Heart left ventricle (tissue), 16 donors: ENCODE measurements at regions of chr5 and their contacts with region 1.

Region 1: DNA sequence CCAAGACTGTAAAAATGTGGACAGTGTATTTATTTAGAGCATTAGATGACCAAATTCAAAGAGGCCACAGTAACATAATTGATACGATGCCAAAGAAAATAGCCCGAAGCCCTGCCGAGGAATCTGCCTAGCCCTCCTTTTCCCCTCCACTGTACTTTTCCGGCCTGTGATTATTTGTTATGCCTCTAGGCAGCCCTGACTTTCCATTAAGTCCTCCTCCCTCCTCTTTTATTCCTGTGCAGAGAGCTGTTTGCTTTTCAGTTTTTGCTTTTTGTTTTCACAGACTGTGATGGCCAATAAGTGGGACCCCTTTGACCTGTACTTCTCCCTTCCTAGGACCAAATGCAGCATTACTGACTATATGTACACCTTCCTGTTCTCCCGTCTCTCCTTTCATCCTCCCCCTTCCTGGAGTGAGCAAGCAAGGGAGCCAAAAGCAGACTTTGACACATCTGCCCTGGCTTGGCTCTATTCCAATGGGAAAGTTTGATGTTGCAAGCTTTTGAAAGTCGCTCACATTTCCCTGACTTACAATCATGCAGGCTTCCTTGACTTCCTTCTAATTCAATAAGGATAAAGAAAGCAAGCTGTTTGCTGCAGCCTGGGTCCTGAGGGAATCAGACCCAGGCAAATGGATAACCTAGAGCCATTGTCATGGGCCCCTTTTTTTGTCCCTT is 76.1 kb downstream of the NREP start:
- DNase-seq: peak in 4 of 5 donors; percentile 64 to 85 (median 73)
- ATAC-seq: peak; percentile 74 to 88 (median 88)
- H3K4me3 ChIP-seq: peak overlapping the region in 6 of 12 donors; percentile 10 to 29 (median 17)
- H3K27ac ChIP-seq: peak overlapping the region; percentile 30 to 72 (median 66)
- H3K4me1 ChIP-seq: peaks cover 0 to 37% (median 22%) of the 10 kb centered on the region in 12 donors
- H3K27me3 ChIP-seq: no peaks in the 10 kb centered on the region
- CTCF ChIP-seq: no peak
- POLR2A ChIP-seq: no peak

Region 2: GRCh38 chr5:111478266-111478665 is 202.6 kb before region 1 on chr5:
- intact Hi-C with region 1: no loop called
- DNase-seq: no peak
- ATAC-seq: no peak
- H3K4me3 ChIP-seq: no peak overlapping the region
- H3K27ac ChIP-seq: no peak overlapping the region
- H3K4me1 ChIP-seq: no peaks in the 10 kb centered on the region
- H3K27me3 ChIP-seq: no peaks in the 10 kb centered on the region
- CTCF ChIP-seq: peak in 1 of 12 donors; percentile 17
- POLR2A ChIP-seq: no peak

Region 3: DNA sequence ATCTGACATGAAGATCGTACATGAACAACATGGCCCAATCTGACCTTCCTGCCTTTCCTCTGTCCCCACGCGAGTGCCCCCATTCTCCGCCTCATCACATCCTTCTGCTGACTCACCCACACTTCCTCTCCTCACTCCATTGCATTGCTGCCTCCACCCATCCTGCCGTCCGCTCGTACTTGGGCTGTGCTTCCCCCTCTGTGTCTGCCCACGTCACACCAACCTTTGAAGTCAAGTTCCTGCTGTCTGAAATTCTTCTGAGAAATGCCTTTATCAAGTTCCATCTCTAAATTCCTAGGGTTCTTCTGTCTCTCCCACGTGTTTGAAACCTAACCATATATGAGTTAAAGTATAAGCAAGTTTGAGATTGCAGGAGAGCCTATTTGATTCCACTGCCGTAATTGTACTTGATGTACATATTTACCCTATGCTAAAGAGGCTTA is 150.6 kb before region 1 on chr5:
- intact Hi-C with region 1: loop called in 1 of 10 experiments (anchors 10 kb)
- DNase-seq: peak; percentile 80 to 88 (median 81)
- ATAC-seq: peak; percentile 91 to 100 (median 98)
- H3K4me3 ChIP-seq: no peak overlapping the region
- H3K27ac ChIP-seq: peak overlapping the region in 11 of 12 donors; percentile 22 to 82 (median 57)
- H3K4me1 ChIP-seq: peaks cover 0 to 51% (median 0%) of the 10 kb centered on the region in 12 donors
- H3K27me3 ChIP-seq: no peaks in the 10 kb centered on the region
- CTCF ChIP-seq: no peak
- POLR2A ChIP-seq: no peak

Region 4: DNA sequence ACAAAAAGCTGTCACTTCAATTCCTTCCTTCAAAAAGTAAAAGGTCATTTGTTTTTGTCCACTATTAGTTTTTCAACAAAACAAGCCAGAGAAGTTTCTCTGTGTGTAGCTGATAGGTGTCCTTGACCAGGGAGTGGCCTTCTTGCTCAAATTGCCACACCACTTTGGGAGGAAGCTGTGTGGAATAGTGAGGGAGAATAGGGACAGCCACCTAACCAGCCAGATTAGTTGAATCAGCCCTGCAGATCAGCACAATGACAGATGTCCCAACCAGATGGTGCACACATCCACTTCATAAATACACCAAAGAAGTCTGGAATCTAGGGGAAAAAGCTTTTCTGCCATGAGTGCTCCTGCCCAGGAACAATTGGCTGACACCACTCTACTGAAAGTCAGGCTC is 38.9 kb after region 1 on chr5:
- intact Hi-C with region 1: no loop called
- DNase-seq: no peak
- ATAC-seq: no peak
- H3K4me3 ChIP-seq: no peak overlapping the region
- H3K27ac ChIP-seq: no peak overlapping the region
- H3K4me1 ChIP-seq: no peaks in the 10 kb centered on the region
- H3K27me3 ChIP-seq: no peaks in the 10 kb centered on the region
- CTCF ChIP-seq: no peak
- POLR2A ChIP-seq: no peak

Region 5: DNA sequence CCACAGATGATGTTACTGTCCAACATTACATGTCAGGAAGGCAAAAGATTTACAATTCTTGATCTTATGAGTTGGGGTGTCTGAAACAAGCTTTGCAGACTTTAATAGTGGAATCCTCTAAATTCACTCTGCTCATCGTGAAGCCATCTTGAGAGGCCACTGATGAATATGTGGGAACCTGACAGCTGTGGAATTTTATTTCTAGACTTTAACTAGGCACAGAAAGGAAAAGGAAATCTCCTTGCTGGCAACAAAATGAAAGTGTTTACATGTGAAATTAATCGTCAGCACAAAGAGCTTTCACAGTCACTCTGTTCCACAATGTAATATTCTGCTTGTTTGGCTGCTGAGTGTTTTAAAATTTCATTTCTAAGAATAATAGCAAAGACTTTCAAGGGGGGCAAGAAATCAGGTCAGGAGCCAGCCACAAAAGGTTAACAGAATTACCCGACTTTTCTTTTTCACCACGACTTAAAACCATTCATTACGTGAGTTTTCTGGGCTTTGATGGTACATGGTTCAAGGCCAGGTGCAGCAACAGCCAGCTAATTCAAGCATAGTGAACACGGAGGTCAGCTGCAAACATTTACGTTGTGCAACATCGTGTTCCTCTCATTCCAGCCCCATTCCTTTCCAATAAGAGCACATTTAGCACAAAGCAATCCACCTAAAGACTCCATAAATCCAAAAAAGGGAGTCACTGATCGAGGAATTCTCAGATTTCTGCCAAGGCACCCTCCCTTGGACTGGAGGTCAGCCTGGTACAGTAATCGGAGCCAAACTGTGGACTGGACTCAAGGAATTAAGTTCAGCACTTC is 61.5 kb after region 1 on chr5:
- intact Hi-C with region 1: loop called in 2 of 10 experiments (anchors 5 kb)
- DNase-seq: no peak
- ATAC-seq: peak in 3 of 4 donors; percentile 48 to 62 (median 53)
- H3K4me3 ChIP-seq: peak overlapping the region in 7 of 12 donors; percentile 1 to 27 (median 5)
- H3K27ac ChIP-seq: peak overlapping the region in 9 of 12 donors; percentile 1 to 61 (median 28)
- H3K4me1 ChIP-seq: peaks cover 3 to 93% (median 47%) of the 10 kb centered on the region in 12 donors
- H3K27me3 ChIP-seq: no peaks in the 10 kb centered on the region
- CTCF ChIP-seq: no peak
- POLR2A ChIP-seq: no peak

Region 6: GRCh38 chr5:111748304-111748763 is 67.5 kb after region 1 on chr5:
- intact Hi-C with region 1: loop called in 2 of 10 experiments (anchors 5 kb)
- DNase-seq: no peak
- ATAC-seq: peak; percentile 72 to 91 (median 84)
- H3K4me3 ChIP-seq: peak overlapping the region in 1 of 12 donors; percentile 8
- H3K27ac ChIP-seq: peak overlapping the region in 9 of 12 donors; percentile 7 to 60 (median 39)
- H3K4me1 ChIP-seq: peaks cover 0 to 77% (median 41%) of the 10 kb centered on the region in 12 donors
- H3K27me3 ChIP-seq: no peaks in the 10 kb centered on the region
- CTCF ChIP-seq: no peak
- POLR2A ChIP-seq: no peak

Region 7: DNA sequence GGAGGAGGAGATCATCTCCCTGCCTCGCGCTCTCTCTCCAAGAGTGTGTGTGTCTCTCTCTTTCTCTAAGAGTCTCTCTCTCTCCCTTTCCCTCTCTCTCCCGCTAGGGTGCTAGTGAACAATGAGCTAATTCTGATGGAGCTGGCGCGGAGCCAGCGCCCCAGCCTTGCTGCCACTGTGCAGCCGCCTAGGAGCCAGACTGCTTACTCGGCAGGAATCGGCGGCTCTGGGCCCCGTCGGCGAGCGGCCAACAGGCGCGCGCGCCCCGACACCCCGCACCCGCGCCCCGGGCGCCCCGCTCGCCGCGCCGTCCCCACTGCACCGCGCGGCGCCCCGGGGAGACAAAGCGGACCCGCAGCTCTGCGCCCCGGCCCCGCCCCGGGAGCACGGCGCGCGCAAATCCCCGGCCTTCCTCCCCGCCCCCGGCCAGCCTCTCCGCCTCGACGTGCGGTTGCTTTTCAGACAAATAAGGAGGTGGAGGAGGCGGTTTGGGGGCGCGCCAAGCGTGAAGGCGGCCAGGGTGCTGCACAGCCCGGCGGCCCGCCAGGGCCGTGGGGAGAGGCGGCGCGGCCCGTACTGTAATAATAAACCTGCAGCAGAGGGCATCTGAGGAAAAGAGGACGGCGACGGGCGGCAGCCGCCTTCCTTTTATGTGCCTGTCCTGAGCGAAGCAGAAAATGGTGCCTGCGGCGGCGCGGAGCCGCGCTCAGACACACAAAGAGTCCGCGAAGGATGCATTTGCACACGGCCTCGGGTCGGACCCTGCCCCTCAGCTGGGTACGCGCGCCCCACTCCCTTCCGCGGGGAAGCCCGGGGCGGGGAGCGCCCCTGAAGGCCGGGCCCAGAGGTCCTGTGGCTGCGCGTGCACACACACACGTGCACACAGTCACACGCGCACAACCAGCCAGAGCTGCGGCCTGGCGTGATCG is 76.7 kb after region 1 on chr5:
- intact Hi-C with region 1: loop called in 6 of 10 experiments (anchors 2 to 5 kb)
- DNase-seq: peak; percentile 97 to 98 (median 97)
- ATAC-seq: peak; percentile 85 to 93 (median 90)
- H3K4me3 ChIP-seq: peak overlapping the region; percentile 48 to 89 (median 70)
- H3K27ac ChIP-seq: peak overlapping the region; percentile 85 to 98 (median 92)
- H3K4me1 ChIP-seq: peaks cover 0 to 42% (median 29%) of the 10 kb centered on the region in 12 donors
- H3K27me3 ChIP-seq: no peaks in the 10 kb centered on the region
- CTCF ChIP-seq: peak in 7 of 12 donors; percentile 30 to 52 (median 45)
- POLR2A ChIP-seq: no peak

Region 8: DNA sequence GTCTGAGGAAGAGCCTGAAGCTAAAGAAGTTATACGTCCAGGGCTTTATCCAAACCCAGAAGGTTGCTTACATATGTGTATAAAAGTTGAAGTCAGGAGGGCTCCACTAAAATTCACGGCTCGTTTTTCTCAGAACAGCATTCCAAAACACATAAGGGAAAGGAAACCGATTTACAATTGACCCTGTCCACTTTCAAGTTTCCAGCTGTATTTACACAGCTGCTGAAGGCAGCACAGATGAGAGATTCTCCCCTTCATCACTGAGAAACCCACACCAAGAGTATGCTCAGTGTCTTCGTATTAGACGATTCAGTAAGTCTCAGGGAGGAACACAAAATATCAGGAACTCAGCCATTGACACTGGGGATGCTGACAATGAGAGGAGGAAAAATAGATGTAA is 82.0 kb after region 1 on chr5:
- intact Hi-C with region 1: loop called in 3 of 10 experiments (anchors 5 kb)
- DNase-seq: no peak
- ATAC-seq: peak in 2 of 4 donors; percentile 42 to 48
- H3K4me3 ChIP-seq: no peak overlapping the region
- H3K27ac ChIP-seq: peak overlapping the region in 4 of 12 donors; percentile 11 to 57 (median 42)
- H3K4me1 ChIP-seq: peaks cover 0 to 9% (median 5%) of the 10 kb centered on the region in 12 donors
- H3K27me3 ChIP-seq: no peaks in the 10 kb centered on the region
- CTCF ChIP-seq: no peak
- POLR2A ChIP-seq: no peak